ENCODE measurements at regions of chr7 and their contacts with region 1.

Region 1: DNA sequence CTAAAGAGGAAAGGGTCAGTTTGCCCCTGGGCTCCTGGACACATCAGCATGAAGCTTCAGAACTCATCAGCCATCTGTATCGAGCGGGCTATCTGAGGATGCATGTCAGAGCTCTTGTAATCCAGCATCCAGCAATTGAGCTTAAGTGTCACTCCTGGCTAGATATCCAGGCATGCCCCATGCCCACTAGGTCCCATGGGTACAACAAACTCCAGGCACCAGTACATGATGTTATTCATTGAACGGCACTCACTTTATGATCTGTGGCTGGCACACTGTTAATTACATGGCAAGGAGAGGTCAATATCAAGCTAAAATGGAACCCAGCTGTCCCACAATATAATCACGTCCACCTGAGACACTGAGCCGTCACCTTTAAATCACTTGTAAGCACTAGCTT is 274.2 kb downstream of the ELMO1 start:
- DNase-seq: no peak
- H3K4me3 ChIP-seq: no peak overlapping the region
- H3K27ac ChIP-seq: no peak overlapping the region
- H3K4me1 ChIP-seq: no peaks in the 10 kb centered on the region
- H3K27me3 ChIP-seq: no peaks in the 10 kb centered on the region
- CTCF ChIP-seq: no peak
- EP300 ChIP-seq: no peak
- POLR2A ChIP-seq: no peak
- RAD21 ChIP-seq: no peak

Region 2: DNA sequence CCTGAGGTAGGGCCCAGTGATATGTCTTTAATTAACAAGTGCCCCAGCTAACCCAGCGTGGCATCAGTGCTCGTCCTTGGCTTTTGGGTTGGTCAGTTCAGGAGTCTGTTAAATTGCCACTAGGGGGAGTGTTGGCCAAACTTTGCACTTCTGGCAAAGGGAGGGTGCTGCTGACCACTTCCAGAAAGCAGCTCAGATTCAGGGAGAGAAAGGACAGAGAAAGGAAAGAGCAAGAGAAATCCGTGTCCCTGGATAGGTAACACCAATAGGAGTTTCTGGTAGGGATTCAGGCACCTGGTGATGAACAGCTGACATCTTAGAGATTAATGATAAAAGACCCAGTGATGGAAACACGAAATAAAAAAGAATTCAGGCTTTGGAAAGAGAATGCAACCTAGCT is 207.1 kb before region 1 on chr7:
- CTCF ChIA-PET with region 1: interaction called, 13 read pairs
- POLR2A ChIA-PET with region 1: no interaction called
- DNase-seq: peak in 1 of 2 experiments; percentile 47
- H3K4me3 ChIP-seq: no peak overlapping the region
- H3K27ac ChIP-seq: no peak overlapping the region
- H3K4me1 ChIP-seq: peaks cover 0 to 6% (median 2%) of the 10 kb centered on the region in 4 experiments; a peak in 4 of 7 replicates
- H3K27me3 ChIP-seq: no peaks in the 10 kb centered on the region
- CTCF ChIP-seq: peak; percentile 69 to 89 (median 85)
- EP300 ChIP-seq: no peak
- POLR2A ChIP-seq: no peak
- RAD21 ChIP-seq: peak; percentile 83 to 89

Region 3: DNA sequence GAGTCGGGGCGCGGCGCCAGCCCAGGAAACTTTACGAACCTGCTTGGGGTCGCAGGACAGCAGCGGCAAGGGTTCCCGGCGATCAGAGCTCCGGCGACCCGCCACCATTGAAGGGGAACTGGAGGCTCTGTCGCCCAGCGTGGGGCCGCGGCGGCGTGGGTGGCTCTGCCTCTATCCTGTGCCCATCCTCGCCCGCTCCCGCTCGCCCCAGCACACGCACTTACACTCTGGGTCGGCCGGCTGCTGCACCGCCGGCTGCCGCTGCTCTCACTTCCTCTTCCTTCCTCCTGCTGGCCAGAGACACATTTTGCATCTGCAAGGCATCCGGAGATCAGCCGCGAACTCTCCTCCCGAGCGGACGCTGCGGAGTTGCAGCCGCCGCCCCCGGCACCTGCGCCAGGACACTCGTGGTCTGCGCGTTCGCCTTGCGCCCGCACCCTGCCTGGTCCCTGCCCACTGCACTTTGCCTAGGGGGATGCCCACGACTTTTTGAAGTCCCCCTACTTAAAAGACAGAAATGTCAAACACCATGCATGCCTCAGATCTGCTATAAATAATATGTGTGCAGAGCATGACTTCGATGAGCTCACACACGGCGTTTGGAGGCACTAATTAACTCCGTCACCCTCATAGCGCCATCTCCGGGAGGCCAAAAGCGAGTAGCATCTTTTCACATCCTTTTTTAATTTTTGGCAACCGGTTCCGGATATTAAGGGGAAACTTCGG is 274.3 kb after region 1 on chr7 and contains the start of gene ELMO1:
- CTCF ChIA-PET with region 1: no interaction called
- POLR2A ChIA-PET with region 1: no interaction called
- DNase-seq: peak; percentile 70 to 81
- H3K4me3 ChIP-seq: peak within 1 kb of the TSS; percentile 70 to 93 (median 74)
- H3K27ac ChIP-seq: no peak within 1 kb of the TSS
- H3K4me1 ChIP-seq: peaks cover 0 to 15% (median 3%) of the 10 kb centered on the region in 4 experiments; a peak in 4 of 7 replicates
- H3K27me3 ChIP-seq: no peaks in the 10 kb centered on the region; a peak in 2 of 7 replicates
- CTCF ChIP-seq: peak; percentile 59 to 60 (median 59)
- EP300 ChIP-seq: no peak
- POLR2A ChIP-seq: peak in 1 of 2 experiments; percentile 75; a peak in 2 of 3 replicates
- RAD21 ChIP-seq: peak; percentile 42 to 57
- total RNA-seq, gene ELMO1: 18.4 and 20.6 TPM in 2 replicates

Measured in H1 (cell line).